ENCODE measurements at regions of chr3 and their contacts with region 1.

Region 1: DNA sequence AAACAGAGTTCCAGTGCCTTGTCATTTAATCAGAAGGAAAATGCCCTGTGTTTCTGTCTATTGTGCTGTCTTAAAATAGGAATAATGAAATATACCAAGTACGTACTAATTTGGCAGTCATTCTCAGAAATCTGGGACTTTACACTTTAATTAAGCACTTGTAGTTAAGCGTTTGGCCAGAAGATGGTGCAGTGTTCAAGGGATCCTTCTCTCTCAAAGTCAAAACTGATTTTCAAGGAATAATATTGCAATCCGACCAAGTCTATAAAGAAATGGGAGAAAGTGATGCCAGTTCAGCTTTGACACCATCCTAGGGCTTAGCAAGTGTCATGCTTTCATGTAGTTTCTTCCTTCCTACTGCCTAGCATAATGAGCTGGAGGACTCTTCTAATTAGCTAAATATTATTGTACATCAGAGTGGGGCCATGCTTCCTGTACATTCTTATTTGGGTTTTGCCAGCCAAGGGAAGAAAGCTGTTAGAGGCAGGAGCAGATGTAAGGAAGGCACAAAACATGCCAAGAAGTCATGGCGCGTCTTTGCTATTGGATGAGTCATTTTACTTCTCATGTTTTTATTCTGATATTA is 64.8 kb downstream of the SAMMSON start:
- ATAC-seq: peak in 2 of 8 experiments; percentile 19 to 39
- H3K4me3 ChIP-seq: no peak overlapping the region
- H3K27ac ChIP-seq: no peak overlapping the region
- H3K4me1 ChIP-seq: peaks cover 0 to 33% of the 10 kb centered on the region in 2 donors

Region 2: GRCh38 chr3:71652781-71653413 is 1588.6 kb after region 1 on chr3:
- in situ Hi-C with region 1: loop called in 3 of 9 experiments (anchors 25 kb)
- ATAC-seq: peak; percentile 67 to 92 (median 77)
- H3K4me3 ChIP-seq: no peak overlapping the region
- H3K27ac ChIP-seq: no peak overlapping the region
- H3K4me1 ChIP-seq: peaks cover 5 to 17% of the 10 kb centered on the region in 2 donors

Region 3: GRCh38 chr3:71681224-71681668 is 1617.0 kb after region 1 on chr3:
- in situ Hi-C with region 1: loop called in 2 of 9 experiments (anchors 25 kb)
- ATAC-seq: peak; percentile 42 to 78 (median 55)
- H3K4me3 ChIP-seq: no peak overlapping the region
- H3K27ac ChIP-seq: no peak overlapping the region
- H3K4me1 ChIP-seq: peaks cover 7 to 18% of the 10 kb centered on the region in 2 donors

Measured in motor neuron (in vitro differentiated cells).